ENCODE measurements at regions of chr15 and their contacts with region 1.

Region 1: DNA sequence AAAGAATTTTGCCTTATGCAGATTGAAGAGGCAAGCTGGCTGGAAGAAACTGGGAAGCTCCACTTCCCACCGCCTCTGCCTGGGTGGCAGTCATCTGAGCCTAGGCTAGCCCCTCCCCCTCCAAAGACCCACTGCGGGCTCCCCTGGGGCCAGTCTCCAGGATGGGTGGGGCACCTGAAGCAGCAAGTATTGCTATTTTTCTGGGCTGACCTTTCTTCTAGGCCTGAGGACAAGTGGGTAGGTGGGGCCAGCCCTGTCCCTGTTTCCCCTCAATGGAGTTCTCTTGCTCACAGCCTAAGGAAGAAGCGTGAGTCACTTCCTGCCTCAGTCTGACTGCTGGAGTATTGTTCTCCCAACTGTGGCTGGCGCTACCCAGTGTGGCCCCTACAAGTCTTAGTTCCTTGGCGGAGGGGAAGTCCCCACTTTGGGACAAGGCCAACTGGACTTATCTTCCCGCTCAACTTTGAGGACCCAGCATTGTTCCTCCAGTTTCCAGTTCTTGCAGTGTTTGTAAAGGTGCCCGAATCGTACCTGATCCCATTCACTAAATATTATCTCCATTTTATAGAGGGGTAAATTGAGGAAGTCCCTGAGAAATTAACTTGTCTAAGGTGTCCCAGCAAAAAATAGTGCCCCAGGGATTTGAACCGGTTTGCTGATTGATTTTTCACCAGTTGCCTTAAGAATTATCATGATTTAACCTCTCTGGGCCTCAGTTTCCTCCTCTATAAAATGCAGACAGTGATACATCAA is 1.4 kb downstream of the FURIN start:
- DNase-seq: peak; percentile 78
- ATAC-seq: peak; percentile 65
- H3K4me3 Mint-ChIP-seq: peak overlapping the region; percentile 90
- H3K27ac Mint-ChIP-seq: peak overlapping the region; percentile 98
- H3K4me1 Mint-ChIP-seq: peaks cover 59% of the 10 kb centered on the region
- H3K27me3 Mint-ChIP-seq: peaks cover 5% of the 10 kb centered on the region

Region 2: DNA sequence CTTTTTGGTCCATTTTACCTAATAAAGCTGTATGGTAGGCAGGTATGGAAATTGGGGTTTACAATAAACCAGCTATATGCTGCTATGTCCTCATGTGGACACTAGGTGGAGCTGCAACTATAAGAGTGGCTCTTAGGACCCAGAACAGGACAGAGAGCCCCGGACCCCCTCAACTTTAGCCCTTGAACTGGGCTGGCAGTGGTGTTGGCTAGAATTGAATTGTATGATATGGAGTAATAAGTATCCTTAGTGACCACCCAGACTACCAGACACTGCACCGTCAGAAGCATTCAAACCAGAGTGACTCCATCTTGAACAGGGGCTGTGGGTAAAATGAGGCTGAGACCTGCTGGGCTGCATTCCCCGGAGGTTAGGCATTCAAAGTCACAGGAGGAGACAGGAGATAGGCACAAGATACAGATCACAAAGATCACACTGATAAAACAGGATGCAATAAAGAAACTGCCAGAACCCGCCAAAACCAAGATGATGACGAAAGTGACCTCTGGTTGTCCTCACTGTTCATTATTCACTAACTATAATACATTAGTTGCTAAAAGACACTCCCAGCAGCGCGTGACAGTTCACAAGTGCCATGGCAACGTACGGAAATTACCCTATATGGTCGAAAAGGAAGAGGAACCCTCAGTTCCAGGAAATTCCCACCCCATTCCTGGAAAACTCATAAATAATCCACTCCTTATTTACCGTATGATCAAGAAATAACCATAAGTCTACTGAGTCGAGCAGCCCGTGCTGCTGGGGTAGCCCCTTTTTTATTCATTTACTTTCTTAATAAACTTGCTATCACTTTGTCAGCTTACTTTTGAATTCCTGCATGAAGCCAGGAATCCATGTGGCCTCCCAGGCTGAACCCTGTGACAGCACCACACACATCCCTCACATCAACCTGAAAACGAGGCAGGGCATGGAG is 221.4 kb before region 1 on chr15:
- CTCF ChIA-PET with region 1: no interaction called
- POLR2A ChIA-PET with region 1: no interaction called
- intact Hi-C with region 1: loop called in 1 of 2 experiments (anchors 5 kb)
- DNase-seq: peak; percentile 78
- ATAC-seq: peak; percentile 82
- H3K4me3 Mint-ChIP-seq: peak overlapping the region; percentile 39
- H3K27ac Mint-ChIP-seq: peak overlapping the region; percentile 93
- H3K4me1 Mint-ChIP-seq: peaks cover 28% of the 10 kb centered on the region
- H3K27me3 Mint-ChIP-seq: no peaks in the 10 kb centered on the region

Region 3: DNA sequence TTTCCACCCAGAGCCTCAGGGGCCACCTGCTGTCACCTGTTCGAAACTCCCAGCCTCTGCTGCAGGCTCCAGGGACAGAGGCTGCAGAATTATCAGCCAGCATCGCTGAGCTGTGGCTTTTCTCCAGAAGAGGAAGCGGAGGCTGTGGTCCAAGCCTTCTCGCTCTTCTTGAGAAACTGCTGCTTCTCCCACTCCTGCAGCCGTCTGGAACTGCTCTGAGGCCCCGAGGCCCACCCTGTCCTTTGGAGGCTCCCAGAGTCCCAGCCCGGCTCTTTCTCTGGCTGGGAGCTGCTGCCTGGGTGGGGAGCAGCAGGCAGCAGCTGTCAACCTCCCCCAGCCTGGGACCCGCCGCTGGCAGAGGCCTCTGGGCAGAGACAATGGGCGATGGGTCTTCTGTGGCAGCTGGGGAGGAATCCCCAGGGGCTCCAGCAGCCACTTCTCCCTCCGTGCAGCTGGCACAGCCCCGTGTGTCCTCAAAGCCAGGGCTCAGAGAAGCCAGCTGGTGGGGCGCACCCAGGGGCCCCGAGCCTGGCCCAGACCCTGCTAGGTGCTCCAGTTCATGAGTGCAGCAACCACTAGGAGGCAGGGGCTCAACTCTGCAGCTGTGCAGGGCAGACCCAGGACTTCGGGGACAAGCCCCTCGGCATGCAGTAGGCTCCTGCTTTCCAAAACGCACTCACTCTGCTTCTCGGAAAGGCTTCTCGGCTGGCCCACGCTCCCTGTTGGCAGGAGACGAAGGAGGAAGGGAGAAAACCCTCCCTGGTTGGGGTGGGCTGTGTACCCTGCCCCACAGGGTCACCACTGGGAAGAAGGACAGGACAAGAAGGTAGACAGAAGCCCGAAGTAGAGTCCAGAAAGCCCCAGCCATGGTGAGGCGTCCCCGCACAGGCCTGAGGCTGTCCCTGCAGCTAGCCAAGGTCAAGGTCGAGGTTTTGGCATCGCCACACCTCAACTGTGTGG is 51.2 kb before region 1 on chr15:
- CTCF ChIA-PET with region 1: no interaction called
- POLR2A ChIA-PET with region 1: interaction called, 4 read pairs
- intact Hi-C with region 1: loop called in 1 of 2 experiments (anchors 10 kb)
- DNase-seq: peak; percentile 56
- ATAC-seq: peak; percentile 47
- H3K4me3 Mint-ChIP-seq: no peak overlapping the region
- H3K27ac Mint-ChIP-seq: peak overlapping the region; percentile 90
- H3K4me1 Mint-ChIP-seq: peaks cover 44% of the 10 kb centered on the region
- H3K27me3 Mint-ChIP-seq: no peaks in the 10 kb centered on the region

Region 4: GRCh38 chr15:90839187-90840071 is 30.3 kb before region 1 on chr15:
- CTCF ChIA-PET with region 1: interaction called, 3 read pairs
- POLR2A ChIA-PET with region 1: interaction called, 18 read pairs
- intact Hi-C with region 1: loop called (anchors 1 to 2 kb)
- DNase-seq: peak; percentile 75
- ATAC-seq: peak; percentile 34
- H3K4me3 Mint-ChIP-seq: peak overlapping the region; percentile 80
- H3K27ac Mint-ChIP-seq: peak overlapping the region; percentile 92
- H3K4me1 Mint-ChIP-seq: peaks cover 63% of the 10 kb centered on the region
- H3K27me3 Mint-ChIP-seq: no peaks in the 10 kb centered on the region

Region 5: DNA sequence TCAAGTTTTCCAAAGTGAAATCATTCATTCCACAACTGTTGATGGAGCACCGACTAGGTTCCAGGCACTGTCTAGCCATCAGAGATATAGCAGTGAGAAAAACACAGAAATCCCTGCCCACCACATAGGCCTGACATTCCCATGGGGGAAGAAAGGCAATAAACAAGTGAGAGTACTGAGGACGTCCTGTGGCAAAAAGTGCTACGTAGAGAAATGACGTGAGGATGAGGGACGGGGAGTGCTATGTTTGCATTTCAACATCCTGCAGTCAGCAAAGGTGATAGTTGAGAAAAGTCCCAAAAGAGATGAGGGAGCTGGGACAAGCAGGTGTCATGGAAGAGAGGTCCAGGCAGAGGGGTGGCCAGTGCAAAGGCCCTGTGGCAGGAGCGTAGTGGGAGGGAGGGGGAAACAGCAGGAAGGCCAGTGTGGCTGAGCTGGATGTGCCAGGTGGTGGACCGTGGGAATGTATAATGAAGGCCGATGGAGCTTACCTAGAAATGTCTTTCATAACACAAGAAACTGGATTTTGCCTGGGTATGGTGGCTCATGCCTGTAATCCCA is 11.8 kb before region 1 on chr15:
- CTCF ChIA-PET with region 1: no interaction called
- POLR2A ChIA-PET with region 1: interaction called, 7 read pairs
- intact Hi-C with region 1: loop called (anchors 1 to 2 kb)
- DNase-seq: no peak
- ATAC-seq: no peak
- H3K4me3 Mint-ChIP-seq: no peak overlapping the region
- H3K27ac Mint-ChIP-seq: peak overlapping the region; percentile 84
- H3K4me1 Mint-ChIP-seq: peaks cover 60% of the 10 kb centered on the region
- H3K27me3 Mint-ChIP-seq: no peaks in the 10 kb centered on the region

Region 6: DNA sequence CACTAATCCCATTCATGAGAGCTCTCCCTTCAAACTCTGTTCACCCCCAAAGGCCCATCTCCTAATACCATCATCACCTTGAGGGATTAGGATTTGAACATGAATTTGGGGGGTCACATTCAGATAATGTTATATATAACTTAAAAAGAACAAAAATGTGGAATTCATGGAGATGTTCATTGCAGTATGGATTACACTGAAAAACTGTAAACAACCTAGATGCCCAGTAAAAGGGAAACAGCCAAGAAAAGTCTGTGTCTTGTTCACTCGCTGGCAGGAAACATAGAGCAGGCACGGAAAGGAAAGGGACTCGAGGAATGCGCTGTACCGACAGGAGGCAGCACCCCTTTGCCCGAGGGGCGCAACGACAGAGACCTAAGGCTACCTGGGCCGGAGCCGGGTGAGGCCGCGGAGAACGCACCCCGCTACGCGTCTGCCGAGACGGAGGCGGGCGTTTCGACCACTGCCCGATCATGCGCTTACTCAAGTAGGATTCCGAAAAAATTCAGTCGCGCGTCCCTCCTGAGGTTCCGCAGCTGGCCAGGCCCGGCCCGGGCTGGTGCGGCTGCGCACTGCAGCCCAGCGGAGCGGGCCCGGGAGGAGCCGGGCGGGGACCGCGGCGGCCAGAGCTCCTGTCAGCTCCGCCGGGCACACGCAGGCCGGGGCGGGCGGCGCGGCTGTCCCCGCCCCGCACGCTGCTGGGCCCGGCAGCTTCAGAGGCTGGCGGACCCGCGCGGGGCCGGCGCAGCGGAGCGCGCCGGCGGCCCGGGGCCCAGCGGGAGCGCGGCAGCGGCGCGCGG is 32.5 kb after region 1 on chr15:
- CTCF ChIA-PET with region 1: interaction called, 3 read pairs
- POLR2A ChIA-PET with region 1: no interaction called
- intact Hi-C with region 1: loop called in 1 of 2 experiments (anchors 1 kb)
- DNase-seq: peak; percentile 83
- ATAC-seq: peak; percentile 79
- H3K4me3 Mint-ChIP-seq: peak overlapping the region; percentile 81
- H3K27ac Mint-ChIP-seq: peak overlapping the region; percentile 88
- H3K4me1 Mint-ChIP-seq: peaks cover 16% of the 10 kb centered on the region
- H3K27me3 Mint-ChIP-seq: no peaks in the 10 kb centered on the region

Measured in activated CD4-positive, alpha-beta T cell treated with anti-CD3 and anti-CD28 coated beads for 36 hours (primary cell).